MCF 10A (cell line): ENCODE measurements at regions of chr2 and their contacts with region 1.

Region 1: DNA sequence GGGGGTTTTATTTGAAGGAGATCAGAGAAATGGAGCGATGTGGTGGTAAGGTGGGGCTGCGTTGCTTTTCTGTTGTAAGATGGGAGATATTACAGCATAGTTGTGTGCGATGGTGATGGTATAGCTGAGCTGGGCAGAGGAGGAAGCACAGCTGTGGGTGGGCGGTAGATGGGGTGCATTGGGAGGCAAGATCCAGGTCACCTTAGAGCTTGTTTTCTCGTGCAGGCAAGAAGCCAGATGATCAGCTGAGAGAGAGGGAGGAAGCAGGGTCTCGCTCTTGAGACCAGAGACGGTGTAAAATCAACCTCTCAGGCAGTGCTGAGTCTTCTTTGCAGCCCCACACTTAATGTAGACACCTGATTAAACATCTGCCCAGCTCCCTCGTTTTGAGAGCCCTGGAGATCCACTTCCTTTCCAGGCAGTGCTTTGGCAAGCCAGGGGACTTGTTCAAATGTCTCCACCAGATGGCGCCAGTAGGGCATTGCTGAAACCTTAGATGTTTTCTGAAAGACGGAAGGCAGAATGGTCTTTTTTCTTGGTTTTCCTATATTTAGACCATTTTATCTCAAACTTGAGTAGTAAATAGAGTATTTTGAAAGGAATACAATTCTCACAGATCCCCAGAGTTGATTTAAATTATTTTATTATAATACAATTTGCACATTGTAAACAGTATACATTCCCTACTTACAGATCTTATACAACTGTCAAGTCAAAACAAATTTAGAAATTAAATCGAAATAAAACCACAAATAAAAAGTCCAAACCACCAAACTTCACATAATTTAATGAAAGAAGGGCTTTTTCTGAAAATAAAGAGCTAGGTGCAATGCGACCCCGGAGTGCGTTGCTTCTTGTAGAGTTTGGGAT is 21.1 kb upstream of the LYPD6B start:
- DNase-seq: peak; percentile 79
- H3K4me3 Mint-ChIP-seq: no peak overlapping the region
- H3K27ac Mint-ChIP-seq: peak overlapping the region; percentile 3
- H3K4me1 Mint-ChIP-seq: no peaks in the 10 kb centered on the region
- H3K27me3 Mint-ChIP-seq: peaks cover 23% of the 10 kb centered on the region
- CTCF ChIP-seq: peak; percentile 83

Region 2: DNA sequence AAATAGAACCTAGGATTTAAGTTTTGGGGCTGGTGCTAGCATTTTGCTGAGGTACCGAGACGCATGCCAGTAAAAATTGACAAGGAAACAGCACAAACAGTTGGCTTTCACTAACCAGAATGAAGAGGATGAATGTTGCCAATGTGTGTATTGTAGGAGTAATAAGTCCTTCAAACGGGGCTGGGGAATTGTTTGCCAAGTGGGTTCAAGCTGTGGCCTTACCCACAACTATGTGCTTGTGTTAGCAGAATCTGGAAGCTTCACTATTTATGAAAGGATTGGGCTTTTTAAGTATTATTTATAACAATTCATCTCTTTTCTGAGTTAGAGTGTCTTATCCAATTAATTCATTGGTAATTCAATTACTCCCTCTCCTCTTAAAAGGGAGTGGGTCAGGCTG is 157.3 kb before region 1 on chr2:
- CTCF ChIA-PET with region 1: no interaction called
- POLR2A ChIA-PET with region 1: no interaction called
- intact Hi-C with region 1: no loop called
- DNase-seq: no peak
- H3K4me3 Mint-ChIP-seq: no peak overlapping the region
- H3K27ac Mint-ChIP-seq: no peak overlapping the region
- H3K4me1 Mint-ChIP-seq: no peaks in the 10 kb centered on the region
- H3K27me3 Mint-ChIP-seq: peaks cover 47% of the 10 kb centered on the region
- CTCF ChIP-seq: no peak

Region 3: DNA sequence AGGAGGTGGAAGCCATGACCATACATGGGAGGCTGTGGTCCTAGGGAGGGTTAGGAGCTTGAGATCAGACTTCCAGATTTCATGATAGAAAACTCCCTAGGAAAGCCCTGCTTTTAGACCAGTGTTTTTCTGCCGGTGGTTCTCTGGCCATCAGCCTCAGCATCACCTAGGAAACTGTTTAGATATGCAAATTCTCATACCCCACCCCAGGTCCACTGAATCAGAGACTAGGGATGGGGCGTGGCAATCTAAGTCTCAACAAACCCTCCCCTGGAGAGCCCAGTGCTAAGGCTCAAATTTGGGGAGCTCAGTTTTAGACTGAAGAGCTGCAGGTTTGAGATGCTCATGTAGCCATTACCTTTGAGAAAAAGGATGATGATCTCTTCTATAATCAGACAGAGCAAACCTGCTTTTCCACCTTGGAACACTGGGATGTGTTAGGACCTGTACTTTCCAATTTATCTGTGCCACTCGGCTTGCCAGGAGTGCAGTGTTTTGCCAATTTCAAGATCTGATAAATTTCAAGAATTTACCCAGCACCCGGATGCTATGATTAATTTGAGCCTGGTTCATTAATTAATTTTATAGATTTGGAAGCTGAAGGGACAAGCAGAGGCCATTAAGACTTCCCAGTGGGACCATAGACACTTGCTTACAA is 10.3 kb before region 1 on chr2:
- CTCF ChIA-PET with region 1: interaction called, 33 read pairs
- POLR2A ChIA-PET with region 1: no interaction called
- intact Hi-C with region 1: no loop called
- DNase-seq: no peak
- H3K4me3 Mint-ChIP-seq: no peak overlapping the region
- H3K27ac Mint-ChIP-seq: no peak overlapping the region
- H3K4me1 Mint-ChIP-seq: no peaks in the 10 kb centered on the region
- H3K27me3 Mint-ChIP-seq: peaks cover 26% of the 10 kb centered on the region
- CTCF ChIP-seq: no peak

Region 4: GRCh38 chr2:149050188-149050587 is 32.8 kb after region 1 on chr2:
- CTCF ChIA-PET with region 1: interaction called, 10 read pairs
- POLR2A ChIA-PET with region 1: interaction called, 3 read pairs
- intact Hi-C with region 1: no loop called
- DNase-seq: no peak
- H3K4me3 Mint-ChIP-seq: no peak overlapping the region
- H3K27ac Mint-ChIP-seq: no peak overlapping the region
- H3K4me1 Mint-ChIP-seq: peaks cover 14% of the 10 kb centered on the region
- H3K27me3 Mint-ChIP-seq: no peaks in the 10 kb centered on the region
- CTCF ChIP-seq: no peak

Region 5: GRCh38 chr2:149410701-149411484 is 393.5 kb after region 1 on chr2:
- CTCF ChIA-PET with region 1: interaction called, 10 read pairs
- POLR2A ChIA-PET with region 1: no interaction called
- intact Hi-C with region 1: no loop called
- DNase-seq: peak; percentile 82
- H3K4me3 Mint-ChIP-seq: no peak overlapping the region
- H3K27ac Mint-ChIP-seq: peak overlapping the region; percentile 70
- H3K4me1 Mint-ChIP-seq: peaks cover 13% of the 10 kb centered on the region
- H3K27me3 Mint-ChIP-seq: no peaks in the 10 kb centered on the region
- CTCF ChIP-seq: no peak

Region 6: GRCh38 chr2:149538138-149538833 is 520.9 kb after region 1 on chr2:
- CTCF ChIA-PET with region 1: interaction called, 34 read pairs
- POLR2A ChIA-PET with region 1: interaction called, 3 read pairs
- intact Hi-C with region 1: no loop called
- DNase-seq: peak; percentile 92
- H3K4me3 Mint-ChIP-seq: no peak overlapping the region
- H3K27ac Mint-ChIP-seq: no peak overlapping the region
- H3K4me1 Mint-ChIP-seq: no peaks in the 10 kb centered on the region
- H3K27me3 Mint-ChIP-seq: no peaks in the 10 kb centered on the region
- CTCF ChIP-seq: no peak

Region 7: DNA sequence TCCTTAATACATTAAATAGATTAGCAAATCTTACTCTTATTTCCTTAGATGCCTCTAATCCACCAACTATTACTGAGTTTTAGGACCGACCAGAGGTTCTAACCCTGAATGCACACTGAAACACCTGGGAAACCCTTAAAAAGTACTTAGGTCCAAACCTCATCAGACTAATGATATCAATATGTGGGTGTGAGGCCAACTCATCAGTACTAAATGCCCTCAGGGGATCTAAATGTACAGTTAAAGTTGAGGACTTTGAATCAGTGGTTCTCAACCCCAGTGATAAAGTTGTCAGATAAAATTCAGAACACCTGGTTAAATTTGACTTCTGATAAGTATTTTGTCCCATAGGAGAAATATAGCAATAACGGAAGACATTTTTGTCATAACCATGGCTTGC is 549.3 kb after region 1 on chr2:
- CTCF ChIA-PET with region 1: interaction called, 144 read pairs
- POLR2A ChIA-PET with region 1: interaction called, 4 read pairs
- intact Hi-C with region 1: loop called (anchors 1 kb)
- DNase-seq: no peak
- H3K4me3 Mint-ChIP-seq: no peak overlapping the region
- H3K27ac Mint-ChIP-seq: no peak overlapping the region
- H3K4me1 Mint-ChIP-seq: no peaks in the 10 kb centered on the region
- H3K27me3 Mint-ChIP-seq: no peaks in the 10 kb centered on the region
- CTCF ChIP-seq: no peak